BJ (cell line): ENCODE measurements at regions of chr7 and their contacts with region 1.

Region 1: GRCh38 chr7:22860784-22861482 is 38.3 kb upstream of the TOMM7 start:
- DNase-seq: no peak
- H3K4me3 ChIP-seq: no peak overlapping the region
- H3K27me3 ChIP-seq: no peaks in the 10 kb centered on the region
- CTCF ChIP-seq: peak; percentile 33; the same call in 1 of the 2 replicates

Region 2: GRCh38 chr7:22872096-22872807 is 11.3 kb after region 1 on chr7:
- CTCF ChIA-PET with region 1: interaction called, 13 read pairs
- POLR2A ChIA-PET with region 1: no interaction called
- DNase-seq: no peak
- H3K4me3 ChIP-seq: no peak overlapping the region
- H3K27me3 ChIP-seq: no peaks in the 10 kb centered on the region
- CTCF ChIP-seq: no peak